Heart left ventricle (tissue), 16 donors: ENCODE measurements at regions of chr4 and their contacts with region 1.

Region 1: GRCh38 chr4:7206911-7207567 is 14.7 kb downstream of the SORCS2 start:
- DNase-seq: peak; percentile 82 to 93 (median 90)
- ATAC-seq: peak; percentile 94 to 98 (median 96)
- H3K4me3 ChIP-seq: peak overlapping the region in 1 of 12 donors; percentile 17
- H3K27ac ChIP-seq: peak overlapping the region in 11 of 12 donors; percentile 63 to 82 (median 72)
- H3K4me1 ChIP-seq: peaks cover 0 to 34% (median 19%) of the 10 kb centered on the region in 12 donors
- H3K27me3 ChIP-seq: peaks cover 0 to 2% (median 0%) of the 10 kb centered on the region in 9 donors
- CTCF ChIP-seq: no peak
- POLR2A ChIP-seq: no peak

Region 2: DNA sequence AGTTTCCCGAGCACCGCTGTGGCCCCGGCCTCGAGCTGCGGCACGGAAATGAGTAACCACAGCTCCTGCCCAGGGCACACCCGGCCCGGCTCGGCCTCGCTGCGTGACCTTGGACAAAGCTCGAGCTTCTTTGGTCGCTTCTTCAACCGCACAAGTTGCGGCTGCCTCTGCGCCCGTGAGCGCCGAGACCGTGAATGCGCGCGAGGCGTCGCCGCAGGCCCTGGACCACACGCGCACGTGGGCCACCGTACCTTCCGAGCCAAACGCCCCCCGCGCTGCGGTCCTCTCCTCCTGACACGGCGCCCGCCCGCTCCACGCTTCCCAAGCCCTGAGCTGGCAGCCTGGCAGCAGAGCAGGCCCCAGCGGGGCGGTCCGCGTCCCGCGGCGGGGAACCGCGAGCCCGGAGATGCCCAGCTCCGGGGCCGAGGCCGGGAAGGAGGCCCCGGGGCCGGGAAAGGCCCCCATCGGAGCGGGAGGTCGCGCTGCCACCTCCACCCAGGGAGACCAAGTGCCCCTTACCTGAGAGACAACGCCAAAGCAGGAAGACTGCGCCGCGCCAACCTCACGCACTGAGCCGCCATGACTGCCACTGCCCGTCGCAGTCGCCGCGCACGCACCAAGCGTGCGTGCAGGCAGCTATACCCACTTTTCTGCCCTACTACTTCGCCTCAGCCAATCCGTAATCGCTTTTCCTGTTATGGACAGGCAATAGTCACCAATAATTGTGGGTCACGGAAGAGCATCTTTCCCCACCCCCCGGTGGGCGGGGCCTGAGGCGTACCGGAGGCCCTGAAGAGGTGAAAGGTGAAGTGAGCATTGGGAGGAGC is 139.4 kb before region 1 on chr4 and contains the start of gene GRPEL1:
- intact Hi-C with region 1: no loop called
- DNase-seq: peak in 4 of 5 donors; percentile 99 to 100 (median 100)
- ATAC-seq: peak; percentile 97 to 99 (median 98)
- H3K4me3 ChIP-seq: peak within 1 kb of the TSS; percentile 70 to 99 (median 88)
- H3K27ac ChIP-seq: peak within 1 kb of the TSS; percentile 62 to 97 (median 91)
- H3K4me1 ChIP-seq: peaks cover 3 to 41% (median 22%) of the 10 kb centered on the region in 12 donors
- H3K27me3 ChIP-seq: no peaks in the 10 kb centered on the region
- CTCF ChIP-seq: peak in 1 of 12 donors; percentile 26
- POLR2A ChIP-seq: peak; percentile 97 to 99
- total RNA-seq, gene GRPEL1: 38.6 to 68.1 (median 55.4) TPM

Region 3: GRCh38 chr4:7236847-7237246 is 29.8 kb after region 1 on chr4:
- intact Hi-C with region 1: loop called in 1 of 10 experiments (anchors 2 kb)
- DNase-seq: peak; percentile 24 to 68 (median 47)
- ATAC-seq: peak; percentile 53 to 77 (median 69)
- H3K4me3 ChIP-seq: no peak overlapping the region
- H3K27ac ChIP-seq: peak overlapping the region in 8 of 12 donors; percentile 6 to 85 (median 43)
- H3K4me1 ChIP-seq: peaks cover 0 to 23% (median 0%) of the 10 kb centered on the region in 12 donors
- H3K27me3 ChIP-seq: no peaks in the 10 kb centered on the region
- CTCF ChIP-seq: no peak
- POLR2A ChIP-seq: no peak

Region 4: GRCh38 chr4:7254736-7255487 is 47.9 kb after region 1 on chr4:
- intact Hi-C with region 1: loop called in 1 of 10 experiments (anchors 5 kb)
- DNase-seq: peak in 3 of 5 donors; percentile 53 to 73 (median 73)
- ATAC-seq: peak in 1 of 4 donors; percentile 8
- H3K4me3 ChIP-seq: no peak overlapping the region
- H3K27ac ChIP-seq: no peak overlapping the region
- H3K4me1 ChIP-seq: peaks cover 0 to 41% (median 12%) of the 10 kb centered on the region in 12 donors
- H3K27me3 ChIP-seq: no peaks in the 10 kb centered on the region
- CTCF ChIP-seq: no peak
- POLR2A ChIP-seq: no peak

Region 5: GRCh38 chr4:7295911-7296660 is 89.0 kb after region 1 on chr4:
- intact Hi-C with region 1: loop called in 1 of 10 experiments (anchors 5 kb)
- DNase-seq: peak in 4 of 5 donors; percentile 42 to 74 (median 44)
- ATAC-seq: peak in 3 of 4 donors; percentile 58 to 70 (median 59)
- H3K4me3 ChIP-seq: no peak overlapping the region
- H3K27ac ChIP-seq: peak overlapping the region in 1 of 12 donors; percentile 36
- H3K4me1 ChIP-seq: peaks cover 0 to 24% (median 8%) of the 10 kb centered on the region in 12 donors
- H3K27me3 ChIP-seq: peaks cover 0 to 4% (median 0%) of the 10 kb centered on the region in 9 donors
- CTCF ChIP-seq: peak; percentile 26 to 74 (median 66)
- POLR2A ChIP-seq: no peak

Region 6: DNA sequence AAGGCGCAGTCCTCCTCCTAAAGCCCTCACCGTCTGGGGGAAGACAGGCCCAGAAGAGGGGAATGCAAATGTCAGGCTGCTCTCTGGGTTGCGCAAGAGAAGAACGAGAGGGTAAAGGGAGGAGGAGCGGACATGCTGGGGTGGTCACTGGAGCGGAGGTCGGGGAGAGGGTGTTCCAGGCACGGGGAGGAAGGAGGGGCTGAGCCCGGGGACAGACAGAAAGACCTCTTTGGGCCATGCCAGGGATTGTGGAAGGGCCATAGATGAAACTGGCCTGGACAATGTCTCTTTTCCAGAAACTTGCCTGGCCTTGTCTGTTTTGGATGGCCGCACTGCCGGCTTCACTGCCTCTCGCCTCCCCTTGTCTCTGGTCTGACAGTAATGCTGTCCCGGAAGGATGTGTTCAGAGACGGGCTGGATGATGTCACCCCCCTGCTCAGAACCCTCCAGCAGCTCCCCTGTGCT is 106.3 kb after region 1 on chr4:
- intact Hi-C with region 1: no loop called
- DNase-seq: no peak
- ATAC-seq: no peak
- H3K4me3 ChIP-seq: no peak overlapping the region
- H3K27ac ChIP-seq: no peak overlapping the region
- H3K4me1 ChIP-seq: peaks cover 0 to 10% (median 0%) of the 10 kb centered on the region in 12 donors
- H3K27me3 ChIP-seq: no peaks in the 10 kb centered on the region
- CTCF ChIP-seq: no peak
- POLR2A ChIP-seq: no peak

Region 7: GRCh38 chr4:7381221-7381889 is 174.3 kb after region 1 on chr4:
- intact Hi-C with region 1: no loop called
- DNase-seq: peak in 4 of 5 donors; percentile 50 to 70 (median 56)
- ATAC-seq: peak; percentile 59 to 80 (median 70)
- H3K4me3 ChIP-seq: no peak overlapping the region
- H3K27ac ChIP-seq: no peak overlapping the region
- H3K4me1 ChIP-seq: peaks cover 0 to 16% (median 1%) of the 10 kb centered on the region in 12 donors
- H3K27me3 ChIP-seq: peaks cover 0 to 4% (median 0%) of the 10 kb centered on the region in 9 donors
- CTCF ChIP-seq: no peak
- POLR2A ChIP-seq: no peak